ENCODE measurements at regions of chr17 and their contacts with region 1.

Region 1: DNA sequence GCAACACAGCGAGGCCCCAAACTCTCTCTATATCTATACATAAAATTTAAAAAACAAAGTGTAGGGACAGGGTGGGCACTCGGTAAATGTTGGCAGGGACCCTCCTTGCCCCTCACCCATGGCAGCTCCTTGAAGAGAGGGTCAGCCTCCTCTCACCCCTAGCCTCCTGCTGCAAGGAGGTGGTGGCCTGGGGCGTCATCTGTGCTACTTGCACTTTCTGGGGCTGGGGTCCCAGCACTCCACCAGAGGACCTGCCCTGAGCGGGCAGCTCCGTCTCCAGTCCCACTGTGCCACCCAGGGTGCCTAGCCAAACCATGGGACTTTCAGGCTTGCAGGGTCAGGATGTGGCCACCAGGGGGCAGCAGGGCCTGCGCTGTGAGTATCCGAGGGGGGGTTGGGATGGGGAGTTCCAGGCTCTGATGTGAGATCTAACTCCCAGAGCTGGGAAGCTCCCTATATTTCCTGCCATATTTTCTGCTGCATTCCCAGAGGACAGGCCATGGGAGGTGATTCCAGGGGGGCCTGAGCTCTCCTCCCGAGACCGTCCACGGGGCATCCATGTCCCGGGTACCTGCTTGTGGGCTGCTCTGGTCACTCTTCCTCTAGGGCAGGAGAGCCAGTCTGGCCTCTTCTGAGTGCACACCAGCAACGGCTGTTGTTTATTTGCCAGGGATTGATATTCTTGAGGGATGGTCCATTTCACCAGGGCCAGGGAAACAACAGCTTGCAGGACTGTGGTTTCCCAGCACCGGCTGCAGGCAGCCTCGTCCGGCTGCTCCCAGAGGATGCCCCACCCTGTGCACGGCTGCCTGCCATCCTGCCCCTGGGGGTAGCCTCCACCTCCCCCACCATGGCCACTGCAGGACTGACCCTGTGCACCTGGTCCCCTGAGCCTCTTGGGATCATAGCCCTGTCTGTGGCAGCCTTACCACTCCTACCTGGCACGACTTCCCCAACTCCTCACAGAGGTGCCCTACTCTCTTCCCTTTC is 1.1 kb downstream of the GPR142 start:
- DNase-seq: peak; percentile 51
- H3K4me3 Mint-ChIP-seq: no peak overlapping the region
- H3K27ac Mint-ChIP-seq: no peak overlapping the region
- H3K4me1 Mint-ChIP-seq: peaks cover 18% of the 10 kb centered on the region
- H3K27me3 Mint-ChIP-seq: peaks cover 9% of the 10 kb centered on the region

Region 2: GRCh38 chr17:74303305-74303704 is 65.1 kb before region 1 on chr17:
- intact Hi-C with region 1: loop called (anchors 5 kb)
- DNase-seq: no peak
- H3K4me3 Mint-ChIP-seq: no peak overlapping the region
- H3K27ac Mint-ChIP-seq: no peak overlapping the region
- H3K4me1 Mint-ChIP-seq: peaks cover 23% of the 10 kb centered on the region
- H3K27me3 Mint-ChIP-seq: peaks cover 7% of the 10 kb centered on the region

Region 3: GRCh38 chr17:74379495-74380085 is 11.2 kb after region 1 on chr17:
- intact Hi-C with region 1: loop called (anchors 1 kb)
- DNase-seq: peak; percentile 83
- H3K4me3 Mint-ChIP-seq: no peak overlapping the region
- H3K27ac Mint-ChIP-seq: no peak overlapping the region
- H3K4me1 Mint-ChIP-seq: no peaks in the 10 kb centered on the region
- H3K27me3 Mint-ChIP-seq: peaks cover 7% of the 10 kb centered on the region

Region 4: DNA sequence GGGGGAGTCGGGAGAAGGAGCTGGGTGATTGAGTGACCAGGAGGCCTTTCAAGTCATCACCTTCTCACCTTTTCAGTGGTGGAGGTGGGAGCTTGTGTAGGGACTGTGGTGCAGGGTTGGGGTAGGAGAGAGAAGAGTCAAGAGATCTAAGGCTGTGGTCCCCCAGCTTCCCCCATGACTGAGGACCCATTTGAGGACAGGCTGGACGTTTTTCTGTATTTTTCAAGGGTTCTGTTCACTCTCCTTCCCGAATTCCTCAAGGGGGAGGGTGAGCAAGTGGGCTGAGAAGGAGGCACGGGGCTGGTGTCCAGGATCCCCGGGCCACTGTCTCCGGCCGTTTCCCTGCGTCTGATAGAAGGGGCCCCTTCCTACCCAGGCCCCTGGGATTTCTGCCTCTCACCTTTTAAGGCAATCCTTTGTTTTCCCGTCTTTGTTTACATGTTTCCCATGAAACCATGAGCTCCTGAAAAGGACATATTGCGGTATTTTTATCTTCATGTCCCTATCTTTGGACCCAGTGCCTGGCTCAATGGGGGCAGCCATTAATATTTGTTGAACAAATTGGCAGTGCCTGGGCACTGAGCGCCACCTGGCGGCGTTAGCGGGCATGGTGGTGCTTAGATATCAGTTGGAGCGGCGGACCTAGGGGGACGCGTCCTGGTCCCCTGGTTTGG is 88.9 kb after region 1 on chr17:
- intact Hi-C with region 1: loop called (anchors 1 kb)
- DNase-seq: peak; percentile 54
- H3K4me3 Mint-ChIP-seq: no peak overlapping the region
- H3K27ac Mint-ChIP-seq: peak overlapping the region; percentile 23
- H3K4me1 Mint-ChIP-seq: peaks cover 28% of the 10 kb centered on the region
- H3K27me3 Mint-ChIP-seq: peaks cover 10% of the 10 kb centered on the region

Region 5: GRCh38 chr17:74528491-74529199 is 160.3 kb after region 1 on chr17:
- intact Hi-C with region 1: loop called (anchors 1 kb)
- DNase-seq: no peak
- H3K4me3 Mint-ChIP-seq: no peak overlapping the region
- H3K27ac Mint-ChIP-seq: no peak overlapping the region
- H3K4me1 Mint-ChIP-seq: peaks cover 6% of the 10 kb centered on the region
- H3K27me3 Mint-ChIP-seq: peaks cover 33% of the 10 kb centered on the region

Region 6: DNA sequence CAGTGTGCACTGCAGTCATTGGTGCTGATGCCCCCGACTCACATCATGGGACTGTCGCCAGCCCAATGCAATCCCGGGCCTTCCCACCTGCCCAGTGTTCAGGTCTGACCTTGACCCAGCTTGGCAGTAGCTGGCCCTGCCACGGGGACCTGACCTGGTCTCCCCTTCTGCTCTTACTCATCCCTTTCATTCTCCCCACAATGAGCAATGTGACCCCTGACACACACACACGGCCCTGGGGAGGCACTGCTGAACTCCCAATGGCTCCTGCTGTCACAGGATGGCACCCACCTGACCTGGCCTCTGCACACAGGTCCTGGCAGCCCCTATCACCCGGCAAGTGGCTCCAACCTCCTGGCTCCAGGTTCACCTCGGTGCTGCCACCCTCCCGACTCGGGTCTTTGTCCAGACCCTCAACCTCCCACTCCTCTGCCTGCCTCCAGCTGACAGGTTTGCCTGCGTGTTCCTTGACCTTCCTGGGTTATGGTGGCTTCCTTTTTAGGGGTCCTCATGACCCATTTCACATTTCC is 171.0 kb after region 1 on chr17:
- intact Hi-C with region 1: no loop called
- DNase-seq: no peak
- H3K4me3 Mint-ChIP-seq: no peak overlapping the region
- H3K27ac Mint-ChIP-seq: no peak overlapping the region
- H3K4me1 Mint-ChIP-seq: no peaks in the 10 kb centered on the region
- H3K27me3 Mint-ChIP-seq: peaks cover 26% of the 10 kb centered on the region

Region 7: GRCh38 chr17:74601944-74602572 is 233.7 kb after region 1 on chr17:
- intact Hi-C with region 1: loop called (anchors 5 kb)
- DNase-seq: no peak
- H3K4me3 Mint-ChIP-seq: no peak overlapping the region
- H3K27ac Mint-ChIP-seq: no peak overlapping the region
- H3K4me1 Mint-ChIP-seq: peaks cover 25% of the 10 kb centered on the region
- H3K27me3 Mint-ChIP-seq: peaks cover 21% of the 10 kb centered on the region

Measured in activated T-helper 1 cell treated with anti-CD3 and anti-CD28 coated beads, Interleukin-12 subunit alpha, Interleukin-12 subunit beta, Interleukin-2, Interleukin-4 antibody, amounts not matched to agents 30 ng/mL and 10 ng/mL and 1 ng/mL, durations not matched to agents 14 hours and 24 hours and 36 hours (primary cell).